Uterus (tissue), 4 donors: ENCODE measurements at regions of chr20 and their contacts with region 1.

Region 1: GRCh38 chr20:8043687-8044282 is 24.2 kb upstream of the TMX4 start:
- DNase-seq: no peak
- H3K4me3 ChIP-seq: no peak overlapping the region
- H3K27ac ChIP-seq: no peak overlapping the region
- H3K4me1 ChIP-seq: no peaks in the 10 kb centered on the region
- H3K27me3 ChIP-seq: no peaks in the 10 kb centered on the region
- CTCF ChIP-seq: peak; percentile 64 to 80 (median 68)
- POLR2A ChIP-seq: no peak

Region 2: GRCh38 chr20:7828437-7828836 is 215.3 kb before region 1 on chr20:
- intact Hi-C with region 1: no loop called
- DNase-seq: no peak
- H3K4me3 ChIP-seq: no peak overlapping the region
- H3K27ac ChIP-seq: no peak overlapping the region
- H3K4me1 ChIP-seq: no peaks in the 10 kb centered on the region
- H3K27me3 ChIP-seq: no peaks in the 10 kb centered on the region
- CTCF ChIP-seq: no peak
- POLR2A ChIP-seq: no peak

Region 3: GRCh38 chr20:8104252-8104651 is 60.5 kb after region 1 on chr20:
- intact Hi-C with region 1: no loop called
- DNase-seq: no peak
- H3K4me3 ChIP-seq: no peak overlapping the region
- H3K27ac ChIP-seq: no peak overlapping the region
- H3K4me1 ChIP-seq: no peaks in the 10 kb centered on the region
- H3K27me3 ChIP-seq: no peaks in the 10 kb centered on the region
- CTCF ChIP-seq: no peak
- POLR2A ChIP-seq: no peak

Region 4: GRCh38 chr20:8389381-8390036 is 345.7 kb after region 1 on chr20:
- intact Hi-C with region 1: loop called (anchors 10 kb)
- DNase-seq: no peak
- H3K4me3 ChIP-seq: no peak overlapping the region
- H3K27ac ChIP-seq: no peak overlapping the region
- H3K4me1 ChIP-seq: no peaks in the 10 kb centered on the region
- H3K27me3 ChIP-seq: no peaks in the 10 kb centered on the region
- CTCF ChIP-seq: peak; percentile 46 to 58 (median 52)
- POLR2A ChIP-seq: no peak

Region 5: DNA sequence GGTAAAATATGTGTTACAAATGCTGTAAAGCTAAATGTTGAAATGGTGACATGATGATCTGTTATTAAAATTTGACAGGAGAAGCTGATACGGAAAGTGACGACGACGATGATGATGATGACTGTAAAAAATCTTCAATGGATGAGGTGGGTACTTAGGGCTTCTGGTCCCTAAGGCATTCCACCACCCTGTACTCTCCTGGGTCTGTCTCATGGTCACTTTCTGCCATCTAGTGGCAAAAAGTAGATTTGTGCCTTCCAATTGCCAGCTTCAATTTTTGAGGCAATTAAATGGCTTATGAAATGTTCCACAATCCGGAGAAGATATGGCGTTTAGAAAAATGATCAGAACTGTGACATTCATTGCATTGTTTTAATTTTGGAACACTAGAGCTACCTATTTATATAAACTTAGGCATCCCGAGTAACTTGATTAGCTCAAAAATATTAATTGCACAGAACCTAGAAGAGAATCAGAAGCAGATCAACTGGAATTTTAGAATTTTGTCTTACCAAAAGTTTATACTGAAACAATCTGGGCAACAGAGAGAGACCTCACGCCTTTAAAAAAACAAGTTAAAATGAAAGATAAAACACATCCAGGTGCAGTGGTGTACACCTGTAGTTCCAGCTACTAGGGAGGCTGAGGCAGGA is 678.6 kb after region 1 on chr20:
- intact Hi-C with region 1: loop called (anchors 5 kb)
- DNase-seq: peak; percentile 20 to 21
- H3K4me3 ChIP-seq: no peak overlapping the region
- H3K27ac ChIP-seq: no peak overlapping the region
- H3K4me1 ChIP-seq: no peaks in the 10 kb centered on the region
- H3K27me3 ChIP-seq: no peaks in the 10 kb centered on the region
- CTCF ChIP-seq: peak; percentile 72 to 85 (median 80)
- POLR2A ChIP-seq: no peak